ENCODE measurements at regions of chr3 and their contacts with region 1.

Region 1: GRCh38 chr3:130111185-130111864 is 29.7 kb downstream of the ALG1L2 start:
- DNase-seq: peak; percentile 99
- H3K4me3 Mint-ChIP-seq: peak overlapping the region; percentile 89
- H3K27ac Mint-ChIP-seq: peak overlapping the region; percentile 96
- H3K4me1 Mint-ChIP-seq: peaks cover 20% of the 10 kb centered on the region
- H3K27me3 Mint-ChIP-seq: no peaks in the 10 kb centered on the region

Region 2: GRCh38 chr3:129576514-129577352 is 534.6 kb before region 1 on chr3:
- CTCF ChIA-PET with region 1: no interaction called
- POLR2A ChIA-PET with region 1: no interaction called
- intact Hi-C with region 1: no loop called
- DNase-seq: peak; percentile 72
- H3K4me3 Mint-ChIP-seq: peak overlapping the region; percentile 3
- H3K27ac Mint-ChIP-seq: peak overlapping the region; percentile 74
- H3K4me1 Mint-ChIP-seq: peaks cover 23% of the 10 kb centered on the region
- H3K27me3 Mint-ChIP-seq: no peaks in the 10 kb centered on the region

Region 3: DNA sequence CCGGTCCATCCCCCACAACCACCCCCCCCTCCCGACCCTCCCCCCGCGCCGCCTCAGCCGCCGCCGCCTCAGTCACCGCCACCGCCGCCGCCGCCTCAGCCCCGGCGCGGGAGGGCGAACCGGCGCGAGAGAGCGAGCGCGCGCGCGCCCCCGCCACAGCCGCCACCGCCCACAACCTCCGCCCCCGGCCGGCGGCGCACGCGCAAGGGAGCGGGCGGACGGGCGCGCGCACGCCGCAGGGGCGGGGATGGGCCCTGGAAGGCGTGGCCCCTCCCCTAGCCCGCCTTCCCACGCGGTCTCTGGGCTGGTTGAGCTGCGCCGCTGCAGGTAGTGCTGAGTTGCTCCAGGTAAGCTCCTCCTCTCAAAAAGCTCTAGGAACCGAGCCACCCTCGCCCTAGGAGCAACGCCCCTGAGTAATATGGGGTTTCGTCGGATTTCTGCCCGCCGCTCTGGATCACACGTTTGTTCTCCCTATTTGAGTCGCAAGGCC is 217.7 kb before region 1 on chr3 and contains the start of gene TMCC1:
- CTCF ChIA-PET with region 1: no interaction called
- POLR2A ChIA-PET with region 1: no interaction called
- intact Hi-C with region 1: loop called (anchors 5 kb)
- DNase-seq: peak; percentile 89
- H3K4me3 Mint-ChIP-seq: peak within 1 kb of the TSS; percentile 88
- H3K27ac Mint-ChIP-seq: peak within 1 kb of the TSS; percentile 82
- H3K4me1 Mint-ChIP-seq: peaks cover 35% of the 10 kb centered on the region
- H3K27me3 Mint-ChIP-seq: no peaks in the 10 kb centered on the region
- total RNA-seq, gene TMCC1: 20.6 to 20.8 TPM

Region 4: DNA sequence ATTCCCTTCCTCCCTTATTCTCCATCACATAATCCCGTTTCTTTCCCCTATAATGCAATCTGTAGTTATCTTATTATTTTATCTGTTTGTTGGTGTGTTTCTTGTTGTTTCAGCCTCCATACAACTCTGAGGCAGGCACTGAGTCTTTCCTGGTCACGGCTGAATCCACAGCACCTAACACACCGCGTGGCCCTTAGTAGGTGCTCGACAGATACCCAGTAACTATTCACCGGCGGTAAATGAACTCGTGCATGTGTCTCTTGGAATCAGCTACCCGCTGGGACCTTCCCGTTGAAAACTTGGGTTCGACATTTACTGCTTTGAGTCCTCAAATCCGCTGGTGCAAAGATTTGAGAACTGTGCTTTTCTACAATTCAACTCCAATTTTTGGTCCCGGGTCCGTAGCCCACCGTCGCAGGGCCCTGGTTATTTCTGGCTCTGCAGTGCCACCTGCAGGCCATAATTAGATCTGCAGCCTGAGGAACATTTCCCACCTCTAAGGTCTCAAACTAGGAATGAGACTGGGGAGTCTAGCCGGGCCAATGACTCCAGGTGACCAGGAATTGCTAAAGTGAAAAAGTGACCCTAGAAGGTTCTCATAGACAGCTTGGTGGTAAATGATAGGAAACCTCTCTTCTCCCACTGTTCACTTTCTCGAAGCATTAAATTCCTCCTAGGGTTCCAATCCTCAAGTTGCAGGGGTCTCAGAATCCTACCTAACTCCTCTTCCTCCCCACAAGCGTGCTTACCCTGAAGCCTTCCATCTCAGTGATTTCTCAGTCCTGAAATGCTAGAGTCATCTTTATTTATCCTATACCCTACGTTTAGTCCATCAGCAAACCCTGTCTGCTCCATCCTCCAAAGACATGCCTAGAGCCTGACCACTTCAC is 176.8 kb before region 1 on chr3:
- CTCF ChIA-PET with region 1: interaction called, 3 read pairs
- POLR2A ChIA-PET with region 1: no interaction called
- intact Hi-C with region 1: loop called (anchors 5 kb)
- DNase-seq: peak; percentile 31
- H3K4me3 Mint-ChIP-seq: no peak overlapping the region
- H3K27ac Mint-ChIP-seq: no peak overlapping the region
- H3K4me1 Mint-ChIP-seq: peaks cover 6% of the 10 kb centered on the region
- H3K27me3 Mint-ChIP-seq: peaks cover 4% of the 10 kb centered on the region

Region 5: GRCh38 chr3:129942296-129942695 is 169.0 kb before region 1 on chr3:
- CTCF ChIA-PET with region 1: interaction called, 15 read pairs
- POLR2A ChIA-PET with region 1: no interaction called
- intact Hi-C with region 1: loop called (anchors 5 kb)
- DNase-seq: peak; percentile 53
- H3K4me3 Mint-ChIP-seq: no peak overlapping the region
- H3K27ac Mint-ChIP-seq: no peak overlapping the region
- H3K4me1 Mint-ChIP-seq: no peaks in the 10 kb centered on the region
- H3K27me3 Mint-ChIP-seq: peaks cover 3% of the 10 kb centered on the region

Measured in activated CD4-positive, alpha-beta memory T cell treated with anti-CD3 and anti-CD28 coated beads for 36 hours (primary cell).